ENCODE measurements at regions of chr9 and their contacts with region 1.

Region 1: DNA sequence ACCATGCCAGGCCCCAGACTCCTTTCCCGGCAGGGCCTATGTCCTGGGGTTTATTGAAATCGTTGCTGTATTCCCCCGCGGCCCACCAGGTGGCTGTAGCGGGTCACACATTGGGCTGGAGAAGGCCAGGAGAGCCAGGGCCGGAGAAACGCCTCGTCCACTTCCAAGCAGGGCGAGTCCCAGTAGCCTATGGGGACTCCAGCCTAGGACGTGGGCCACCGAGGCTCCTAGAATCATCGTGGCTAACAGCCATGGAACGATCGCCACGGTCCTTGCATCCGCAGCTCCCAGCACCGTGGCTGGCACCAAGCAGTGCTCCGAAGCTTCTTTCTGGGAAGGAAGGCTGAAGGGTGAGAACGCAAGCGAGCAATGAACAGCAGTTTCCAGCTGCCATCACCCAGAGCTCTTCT is 87.7 kb downstream of the ENTREP1 start:
- DNase-seq: no peak
- H3K4me3 ChIP-seq: peak overlapping the region; percentile 54
- CTCF ChIP-seq: peak; percentile 87

Region 2: DNA sequence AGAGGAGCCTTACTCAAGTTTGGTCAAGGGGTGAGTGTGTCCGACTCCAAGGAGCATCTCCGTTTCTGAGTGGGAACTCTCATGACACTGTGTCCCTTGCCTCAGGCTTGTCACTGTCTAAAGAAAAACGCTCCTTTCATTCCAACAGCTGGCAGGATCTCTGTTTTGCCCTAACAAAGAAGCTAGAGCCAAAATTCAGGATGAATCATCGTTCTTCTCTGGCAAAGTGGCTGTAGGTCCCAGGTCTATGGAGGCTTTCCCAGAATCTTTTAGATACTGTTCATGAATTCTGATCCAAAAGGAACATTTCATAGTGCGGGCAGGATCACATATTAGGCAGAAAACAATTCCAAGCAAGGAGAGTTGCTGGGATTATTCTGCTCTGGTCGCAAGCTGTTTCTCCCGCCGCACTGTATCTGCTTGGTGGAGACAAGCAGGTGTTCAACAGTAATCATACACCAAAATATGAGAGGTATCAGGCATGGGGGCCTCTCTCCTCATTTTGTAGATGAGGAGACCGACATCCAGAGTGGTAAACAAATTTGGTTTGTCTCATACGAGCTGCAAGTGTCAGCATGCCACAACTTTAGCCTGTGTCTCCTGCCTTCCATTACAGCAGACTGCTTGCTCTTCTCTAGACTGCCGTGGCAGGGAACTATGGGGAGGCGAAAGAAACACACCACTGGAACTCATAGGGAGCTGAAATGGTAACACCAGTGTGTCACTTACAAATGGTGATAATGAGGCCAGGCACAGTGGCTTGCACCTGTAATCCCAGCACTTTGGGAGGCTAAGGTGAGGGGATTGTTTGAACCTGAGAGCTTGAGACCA is 15.1 kb before region 1 on chr9:
- CTCF ChIA-PET with region 1: no interaction called
- POLR2A ChIA-PET with region 1: no interaction called
- DNase-seq: no peak
- H3K4me3 ChIP-seq: no peak overlapping the region
- CTCF ChIP-seq: no peak

Region 3: GRCh38 chr9:69444021-69444420 is 31.3 kb after region 1 on chr9:
- CTCF ChIA-PET with region 1: no interaction called
- POLR2A ChIA-PET with region 1: no interaction called
- DNase-seq: no peak
- H3K4me3 ChIP-seq: no peak overlapping the region
- CTCF ChIP-seq: no peak

Region 4: DNA sequence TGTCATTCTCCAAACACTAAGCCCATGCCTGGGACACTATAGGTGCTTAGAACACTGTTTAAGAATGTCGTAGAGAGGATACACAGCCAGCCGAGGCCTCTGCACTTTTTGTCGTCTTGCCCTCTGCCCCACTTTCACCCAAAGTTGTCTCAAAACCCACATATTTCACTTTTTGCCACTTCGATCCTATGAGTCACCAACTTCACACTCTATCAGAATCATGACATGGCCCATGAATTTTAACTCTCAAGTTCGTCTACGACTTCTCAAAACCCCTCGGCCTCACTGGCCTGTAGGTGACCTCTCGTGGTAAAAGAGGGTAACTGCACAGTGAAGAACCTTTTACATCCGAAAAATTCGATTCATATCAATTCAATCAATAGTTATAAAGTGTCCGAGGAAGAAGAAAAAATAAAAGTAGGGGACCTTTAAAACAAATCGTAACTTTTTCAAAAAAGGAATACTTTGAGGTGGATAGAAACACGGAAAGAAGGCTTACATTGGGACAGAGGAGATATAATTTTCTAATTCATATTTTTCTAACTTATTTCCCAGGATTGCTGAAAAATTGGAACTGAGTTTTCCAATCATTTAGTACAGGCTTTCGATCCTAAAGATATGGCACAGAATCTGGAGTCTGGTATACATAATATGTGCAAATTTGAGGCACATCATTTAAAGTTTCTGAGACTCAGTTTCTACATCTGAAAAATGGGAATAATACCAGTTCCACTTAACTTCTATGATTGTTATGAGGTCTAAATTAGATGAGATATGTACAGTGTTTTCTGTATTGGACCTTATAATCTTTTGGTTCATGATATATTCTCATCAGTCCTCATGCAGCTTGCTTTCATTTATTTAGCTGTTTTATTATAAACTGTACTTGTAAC is 136.8 kb after region 1 on chr9:
- CTCF ChIA-PET with region 1: interaction called, 22 read pairs
- POLR2A ChIA-PET with region 1: no interaction called
- DNase-seq: no peak
- H3K4me3 ChIP-seq: no peak overlapping the region
- CTCF ChIP-seq: peak; percentile 70

Measured in AG04449 (cell line).